A673 (cell line): ENCODE measurements at regions of chr6 and their contacts with region 1.

Region 1: DNA sequence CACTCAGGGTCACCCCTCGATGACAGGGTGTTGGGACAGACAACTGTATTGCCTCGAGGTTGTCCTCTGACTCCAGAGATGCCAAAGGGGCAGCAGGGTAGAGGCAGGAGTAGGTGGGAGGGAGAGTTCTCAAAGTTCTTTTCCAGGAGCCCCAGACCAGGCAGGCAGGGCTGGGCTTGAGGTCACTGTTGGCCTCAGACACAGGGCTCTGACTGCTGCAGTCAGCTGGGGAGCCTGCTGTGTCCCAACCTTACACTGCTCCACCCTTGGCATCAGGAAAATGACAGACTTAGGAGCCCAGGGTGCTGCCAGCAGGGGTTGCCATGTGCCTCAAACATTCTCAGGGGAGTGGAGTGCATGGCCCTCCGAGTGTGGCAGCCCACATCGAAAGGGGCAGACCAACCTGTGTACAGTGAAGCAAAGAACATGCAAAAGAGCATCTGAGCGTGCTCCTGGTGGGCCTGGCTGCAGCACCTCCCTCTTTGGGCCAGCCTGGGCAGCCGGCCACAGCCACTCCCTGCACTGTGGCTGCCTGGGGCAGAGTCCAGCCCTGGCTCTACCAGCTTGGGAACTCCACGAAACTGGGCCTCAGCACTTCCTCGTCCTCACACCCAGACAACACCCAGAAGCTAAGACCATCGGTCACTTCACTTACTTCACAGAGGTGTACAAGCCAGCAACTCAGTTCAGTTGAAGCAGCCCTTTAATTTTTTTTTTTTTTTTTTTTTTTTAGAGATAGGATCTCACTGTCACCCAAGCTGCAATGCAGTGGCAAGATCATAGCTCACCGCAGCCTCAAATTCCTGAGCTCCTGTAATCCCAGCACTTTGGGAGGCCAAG is 24.0 kb downstream of the C6orf132 start:
- DNase-seq: no peak
- H3K4me3 ChIP-seq: no peak overlapping the region
- H3K27ac ChIP-seq: no peak overlapping the region
- H3K4me1 ChIP-seq: no peaks in the 10 kb centered on the region
- H3K27me3 ChIP-seq: no peaks in the 10 kb centered on the region
- CTCF ChIP-seq: no peak

Region 2: DNA sequence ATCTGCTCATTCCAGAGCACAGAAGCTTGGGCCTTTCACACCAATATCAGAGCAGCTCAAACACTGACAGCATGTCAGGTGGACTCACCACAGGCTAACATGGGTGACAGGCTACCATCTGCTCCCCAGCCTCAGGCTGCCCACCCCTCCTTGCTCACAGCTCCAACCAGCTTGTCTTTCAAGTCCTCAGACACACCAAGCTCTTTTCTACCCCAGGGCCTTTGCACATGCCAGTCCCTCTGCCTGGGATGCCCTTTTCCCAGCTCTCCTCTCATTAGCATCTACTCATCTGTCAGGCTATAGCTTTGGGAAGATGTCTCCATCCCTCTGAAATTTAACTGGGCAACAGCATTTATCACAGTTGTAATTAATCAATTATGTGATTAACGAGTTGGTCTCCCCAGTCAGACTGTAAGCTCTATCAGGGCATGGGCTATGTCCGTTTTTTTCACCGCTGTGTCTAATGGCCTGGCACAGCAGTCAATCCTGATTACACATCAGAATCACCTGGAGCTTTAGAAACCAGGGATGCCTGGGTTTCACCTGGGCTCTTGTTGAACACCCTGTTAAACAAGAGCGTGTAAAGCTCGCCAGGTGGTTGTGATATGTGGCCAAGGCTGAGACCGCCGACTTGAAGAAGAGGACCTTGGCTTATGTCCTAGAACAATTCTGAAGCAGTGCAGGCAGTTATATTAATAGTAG is 188.2 kb after region 1 on chr6:
- CTCF ChIA-PET with region 1: no interaction called
- POLR2A ChIA-PET with region 1: interaction called, 10 read pairs
- intact Hi-C with region 1: no loop called
- DNase-seq: no peak
- H3K4me3 ChIP-seq: no peak overlapping the region
- H3K27ac ChIP-seq: no peak overlapping the region
- H3K4me1 ChIP-seq: no peaks in the 10 kb centered on the region
- H3K27me3 ChIP-seq: no peaks in the 10 kb centered on the region
- CTCF ChIP-seq: no peak